ENCODE measurements at regions of chr6 and their contacts with region 1.

Region 1: DNA sequence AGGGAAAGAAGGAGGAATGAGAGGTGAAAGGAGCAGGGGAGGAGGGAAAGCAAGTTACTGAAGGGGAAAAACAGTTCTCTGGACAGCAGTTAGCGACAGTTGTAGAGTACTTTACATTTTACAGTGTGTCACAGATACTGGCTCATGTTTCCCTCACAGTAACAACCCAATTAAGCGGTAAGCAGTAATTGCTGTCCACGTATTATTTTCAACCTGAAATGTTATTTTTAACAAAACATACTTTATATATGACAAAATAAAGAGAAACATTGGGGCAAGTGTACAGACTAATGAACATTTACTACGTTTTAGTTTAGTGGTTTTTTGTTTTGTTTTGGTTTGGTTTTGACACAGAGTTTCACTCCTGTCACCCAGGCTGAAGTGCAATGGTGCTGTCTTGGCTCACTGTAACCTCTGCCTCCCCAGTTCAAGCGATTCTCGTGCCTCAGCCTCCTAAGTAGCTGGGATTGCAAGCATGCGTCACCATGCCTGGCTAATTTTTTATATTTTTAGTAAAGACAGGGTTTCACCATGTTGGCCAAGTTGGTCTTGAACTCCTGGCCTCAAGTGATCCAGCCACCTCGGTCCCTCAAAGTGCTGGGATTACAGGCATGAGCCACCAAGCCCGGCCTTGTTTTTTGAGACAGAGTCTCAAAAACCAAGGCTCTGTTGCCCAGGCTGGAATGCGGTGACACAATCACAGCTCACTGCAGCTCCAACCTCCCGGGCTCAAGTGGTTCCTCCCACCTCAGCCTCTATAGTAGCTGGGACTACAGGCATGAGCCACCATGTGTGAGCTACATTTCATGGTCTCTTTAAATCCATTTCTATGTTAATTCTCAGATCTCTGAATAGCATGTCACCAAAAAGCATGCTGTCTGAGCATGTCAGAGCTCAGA is 22.6 kb upstream of the BTN3A2 start:
- DNase-seq: no peak
- H3K4me3 ChIP-seq: no peak overlapping the region
- H3K27ac ChIP-seq: no peak overlapping the region
- H3K4me1 ChIP-seq: peaks cover 2% of the 10 kb centered on the region
- H3K27me3 ChIP-seq: peaks cover 0 to 3% of the 10 kb centered on the region in 2 experiments
- CTCF ChIP-seq: no peak
- POLR2A ChIP-seq: no peak

Region 2: GRCh38 chr6:26295691-26296555 is 46.4 kb before region 1 on chr6:
- CTCF ChIA-PET with region 1: no interaction called
- POLR2A ChIA-PET with region 1: no interaction called
- dilution Hi-C with region 1: no loop called
- intact Hi-C with region 1: no loop called
- DNase-seq: peak; percentile 72
- H3K4me3 ChIP-seq: no peak overlapping the region
- H3K27ac ChIP-seq: peak overlapping the region; percentile 73
- H3K4me1 ChIP-seq: peaks cover 8% of the 10 kb centered on the region
- H3K27me3 ChIP-seq: peaks cover 3 to 28% of the 10 kb centered on the region in 2 experiments
- CTCF ChIP-seq: no peak
- POLR2A ChIP-seq: no peak

Region 3: DNA sequence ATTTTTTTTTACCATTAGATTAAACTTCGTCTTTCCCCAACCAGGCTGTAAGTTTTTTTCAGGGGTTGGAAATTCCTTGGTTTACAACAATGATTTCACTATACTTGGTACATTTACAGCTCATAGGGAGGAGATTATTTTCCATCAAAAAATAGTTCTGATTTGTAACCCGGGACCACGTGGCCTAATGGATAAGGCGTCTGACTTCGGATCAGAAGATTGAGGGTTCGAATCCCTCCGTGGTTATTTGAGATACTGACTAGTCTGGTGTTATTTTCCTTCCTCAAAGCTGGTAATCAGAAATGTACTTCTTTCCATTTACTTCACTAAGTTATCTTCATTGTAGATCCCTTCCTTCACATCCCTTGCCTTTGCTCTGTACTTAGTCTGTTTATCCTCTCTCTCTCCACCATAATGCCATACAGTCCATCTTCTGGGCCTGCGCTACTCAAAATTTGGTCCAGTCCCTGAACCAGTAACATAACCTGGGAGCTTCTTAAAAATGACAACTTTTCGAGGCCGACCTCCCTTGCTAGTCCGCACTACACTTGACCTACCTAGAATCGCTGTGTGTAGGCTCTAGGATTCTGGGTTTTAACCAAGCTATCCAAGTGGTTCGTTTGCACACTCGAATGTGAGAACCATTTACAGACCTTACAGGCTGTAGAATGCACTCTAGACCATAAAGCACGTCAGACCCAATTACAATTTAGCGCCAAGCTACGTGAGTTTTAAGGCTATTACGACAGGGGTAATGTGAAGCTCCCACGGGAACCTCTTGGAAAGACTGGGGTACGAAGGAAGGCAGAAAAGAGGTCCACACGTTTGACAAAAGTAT is 19.5 kb before region 1 on chr6:
- CTCF ChIA-PET with region 1: interaction called, 22 read pairs
- POLR2A ChIA-PET with region 1: no interaction called
- dilution Hi-C with region 1: no loop called
- intact Hi-C with region 1: no loop called
- DNase-seq: peak; percentile 90
- H3K4me3 ChIP-seq: peak overlapping the region; percentile 50 to 85 (median 85)
- H3K27ac ChIP-seq: peak overlapping the region; percentile 44
- H3K4me1 ChIP-seq: peaks cover 6% of the 10 kb centered on the region
- H3K27me3 ChIP-seq: no peaks in the 10 kb centered on the region
- CTCF ChIP-seq: no peak
- POLR2A ChIP-seq: no peak

Region 4: GRCh38 chr6:26421259-26422144 is 79.1 kb after region 1 on chr6:
- CTCF ChIA-PET with region 1: interaction called, 22 read pairs
- POLR2A ChIA-PET with region 1: interaction called, 8 read pairs
- dilution Hi-C with region 1: no loop called
- intact Hi-C with region 1: loop called (anchors 1 kb)
- DNase-seq: peak; percentile 95
- H3K4me3 ChIP-seq: peak overlapping the region; percentile 41 to 75 (median 66)
- H3K27ac ChIP-seq: peak overlapping the region; percentile 65
- H3K4me1 ChIP-seq: peaks cover 6% of the 10 kb centered on the region
- H3K27me3 ChIP-seq: no peaks in the 10 kb centered on the region
- CTCF ChIP-seq: no peak
- POLR2A ChIP-seq: no peak

Region 5: GRCh38 chr6:26493258-26493657 is 150.9 kb after region 1 on chr6:
- CTCF ChIA-PET with region 1: interaction called, 23 read pairs
- POLR2A ChIA-PET with region 1: no interaction called
- dilution Hi-C with region 1: no loop called
- intact Hi-C with region 1: no loop called
- DNase-seq: peak; percentile 19
- H3K4me3 ChIP-seq: no peak overlapping the region
- H3K27ac ChIP-seq: no peak overlapping the region
- H3K4me1 ChIP-seq: no peaks in the 10 kb centered on the region
- H3K27me3 ChIP-seq: peaks cover 11 to 37% of the 10 kb centered on the region in 2 experiments
- CTCF ChIP-seq: peak; percentile 4 to 28
- POLR2A ChIP-seq: no peak

Region 6: GRCh38 chr6:26537846-26538571 is 195.7 kb after region 1 on chr6 and contains the start of gene HMGN4:
- CTCF ChIA-PET with region 1: interaction called, 42 read pairs
- POLR2A ChIA-PET with region 1: no interaction called
- dilution Hi-C with region 1: loop called (anchors 25 kb)
- intact Hi-C with region 1: loop called (anchors 1 kb)
- DNase-seq: peak; percentile 93
- H3K4me3 ChIP-seq: peak within 1 kb of the TSS; percentile 87 to 99 (median 98)
- H3K27ac ChIP-seq: peak within 1 kb of the TSS; percentile 85
- H3K4me1 ChIP-seq: peaks cover 21% of the 10 kb centered on the region
- H3K27me3 ChIP-seq: no peaks in the 10 kb centered on the region
- CTCF ChIP-seq: no peak
- POLR2A ChIP-seq: no peak
- total RNA-seq, gene HMGN4: 33.7 and 36.9 TPM in 2 replicates

Region 7: DNA sequence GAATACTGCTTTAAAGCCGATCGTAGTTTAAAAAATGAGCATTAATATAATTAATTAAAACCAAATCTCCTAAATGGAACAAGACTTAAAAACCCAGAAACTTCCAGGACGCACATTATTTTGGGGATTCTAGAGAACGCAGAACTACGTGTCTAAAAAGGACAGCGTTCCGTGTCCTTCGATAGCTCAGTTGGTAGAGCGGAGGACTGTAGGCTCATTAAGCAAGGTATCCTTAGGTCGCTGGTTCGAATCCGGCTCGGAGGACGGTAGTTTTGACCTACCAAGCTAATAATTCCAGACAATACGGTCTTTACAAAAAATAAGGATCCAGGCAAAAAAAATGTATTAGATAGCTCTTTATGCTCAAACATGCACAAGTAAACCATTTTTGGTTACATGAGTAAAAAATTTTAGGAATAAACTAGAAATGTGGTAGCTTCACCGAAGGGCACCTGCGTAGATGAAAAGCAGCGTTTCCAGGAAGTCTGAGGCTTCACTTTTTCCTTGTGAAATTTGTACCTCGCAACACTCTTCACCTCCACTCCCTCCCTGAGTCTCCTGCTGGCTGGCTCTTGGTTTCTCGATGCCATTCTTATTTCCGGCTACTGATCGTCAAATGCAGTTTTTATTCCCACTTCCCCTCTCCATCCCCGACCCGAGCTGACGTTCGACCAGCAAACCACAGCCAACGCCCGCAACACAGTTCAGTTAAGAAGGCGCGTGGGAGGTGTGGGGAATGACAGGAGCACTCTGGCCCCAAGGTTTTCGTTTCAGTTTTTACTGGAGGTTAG is 234.8 kb after region 1 on chr6:
- CTCF ChIA-PET with region 1: interaction called, 21 read pairs
- POLR2A ChIA-PET with region 1: no interaction called
- dilution Hi-C with region 1: no loop called
- intact Hi-C with region 1: loop called (anchors 1 kb)
- DNase-seq: peak; percentile 54
- H3K4me3 ChIP-seq: peak overlapping the region; percentile 23 to 57 (median 32)
- H3K27ac ChIP-seq: no peak overlapping the region
- H3K4me1 ChIP-seq: peaks cover 8% of the 10 kb centered on the region
- H3K27me3 ChIP-seq: peaks cover 12 to 16% of the 10 kb centered on the region in 2 experiments
- CTCF ChIP-seq: no peak
- POLR2A ChIP-seq: no peak

Region 8: DNA sequence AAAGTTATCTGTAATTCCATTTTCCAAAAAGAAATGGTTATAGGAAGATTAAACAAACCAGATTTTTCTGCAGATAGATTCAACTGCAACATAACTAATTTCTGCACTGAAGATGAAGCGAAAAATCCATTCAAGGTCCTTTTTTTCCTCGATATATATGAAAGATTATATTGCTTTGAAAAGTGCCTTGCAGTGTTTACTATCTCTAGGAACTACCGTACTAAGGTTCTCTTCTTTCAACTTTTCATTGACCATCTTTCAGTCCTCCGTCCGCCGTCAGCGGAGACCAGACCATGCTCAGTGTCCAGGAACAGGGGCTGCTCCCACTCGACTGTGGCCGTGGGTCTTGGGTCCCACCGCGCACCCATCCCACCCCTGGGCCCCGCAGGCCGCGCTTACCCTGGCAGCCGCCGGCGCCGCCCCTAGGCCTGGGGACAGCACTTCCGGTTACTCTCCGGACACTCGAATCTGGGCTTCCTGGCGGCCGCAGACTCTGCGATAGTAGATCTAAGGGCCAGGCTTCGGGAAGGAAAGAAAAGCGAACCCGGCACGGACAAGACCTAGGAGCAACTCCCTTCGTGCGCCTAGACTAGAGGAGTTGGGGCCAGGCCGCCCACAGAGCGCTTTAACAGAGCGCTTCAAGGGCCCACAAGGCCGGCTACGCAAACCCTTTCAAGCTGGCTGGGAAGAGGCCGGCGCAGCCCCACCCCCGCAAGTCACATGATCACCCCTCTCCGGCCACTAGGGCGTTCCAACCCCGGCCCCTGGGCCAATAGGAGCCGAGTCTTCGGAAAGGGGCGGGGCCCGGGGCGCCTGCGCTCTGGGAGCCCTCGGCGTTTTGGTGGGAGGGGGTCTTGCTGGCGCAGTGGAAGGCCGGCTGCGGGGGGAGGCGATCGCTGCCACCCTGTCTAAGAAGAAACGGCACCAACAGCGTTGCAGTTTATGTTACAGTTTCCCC is 317.0 kb after region 1 on chr6 and contains the start of gene ZNF322:
- CTCF ChIA-PET with region 1: no interaction called
- POLR2A ChIA-PET with region 1: no interaction called
- dilution Hi-C with region 1: no loop called
- intact Hi-C with region 1: no loop called
- DNase-seq: peak; percentile 95
- H3K4me3 ChIP-seq: peak within 1 kb of the TSS; percentile 53 to 89 (median 70)
- H3K27ac ChIP-seq: peak within 1 kb of the TSS; percentile 58
- H3K4me1 ChIP-seq: peaks cover 9% of the 10 kb centered on the region
- H3K27me3 ChIP-seq: peaks cover 6 to 13% of the 10 kb centered on the region in 2 experiments
- CTCF ChIP-seq: no peak
- POLR2A ChIP-seq: no peak
- total RNA-seq, gene ZNF322: 15.2 and 17.0 TPM in 2 replicates